Activated CD4-positive, alpha-beta memory T cell treated with anti-CD3 and anti-CD28 coated beads, Interleukin-2, amount 10 ng/mL, durations not matched to agents 7 days and 5 days (primary cell): ENCODE measurements at regions of chr2 and their contacts with region 1.

Region 1: GRCh38 chr2:203730076-203730729 is 23.8 kb downstream of the CD28 start:
- DNase-seq: no peak
- H3K4me3 Mint-ChIP-seq: peak overlapping the region; percentile 28
- H3K27ac Mint-ChIP-seq: peak overlapping the region; percentile 94
- H3K4me1 Mint-ChIP-seq: peaks cover 92% of the 10 kb centered on the region
- H3K27me3 Mint-ChIP-seq: no peaks in the 10 kb centered on the region

Region 2: GRCh38 chr2:203623096-203623495 is 107.1 kb before region 1 on chr2:
- CTCF ChIA-PET with region 1: no interaction called
- POLR2A ChIA-PET with region 1: no interaction called
- DNase-seq: no peak
- H3K4me3 Mint-ChIP-seq: no peak overlapping the region
- H3K27ac Mint-ChIP-seq: no peak overlapping the region
- H3K4me1 Mint-ChIP-seq: peaks cover 8% of the 10 kb centered on the region
- H3K27me3 Mint-ChIP-seq: peaks cover 3% of the 10 kb centered on the region

Region 3: DNA sequence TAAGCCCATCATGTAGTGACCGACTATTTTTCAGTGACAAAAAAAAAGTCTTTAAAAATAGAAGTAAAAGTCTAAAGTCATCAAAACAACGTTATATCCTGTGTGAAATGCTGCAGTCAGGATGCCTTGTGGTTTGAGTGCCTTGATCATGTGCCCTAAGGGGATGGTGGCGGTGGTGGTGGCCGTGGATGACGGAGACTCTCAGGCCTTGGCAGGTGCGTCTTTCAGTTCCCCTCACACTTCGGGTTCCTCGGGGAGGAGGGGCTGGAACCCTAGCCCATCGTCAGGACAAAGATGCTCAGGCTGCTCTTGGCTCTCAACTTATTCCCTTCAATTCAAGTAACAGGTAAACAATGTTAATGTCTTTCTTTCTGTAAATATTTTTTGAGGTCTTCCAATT is 23.8 kb before region 1 on chr2 and contains the start of gene CD28:
- CTCF ChIA-PET with region 1: interaction called, 8 read pairs
- POLR2A ChIA-PET with region 1: interaction called, 516 read pairs
- DNase-seq: peak; percentile 95
- H3K4me3 Mint-ChIP-seq: peak within 1 kb of the TSS; percentile 90
- H3K27ac Mint-ChIP-seq: peak within 1 kb of the TSS; percentile 97
- H3K4me1 Mint-ChIP-seq: peaks cover 46% of the 10 kb centered on the region
- H3K27me3 Mint-ChIP-seq: no peaks in the 10 kb centered on the region
- total RNA-seq, gene CD28: 194 to 205 TPM

Region 4: GRCh38 chr2:203718087-203718486 is 12.1 kb before region 1 on chr2:
- CTCF ChIA-PET with region 1: interaction called, 45 read pairs
- POLR2A ChIA-PET with region 1: interaction called, 516 read pairs
- DNase-seq: peak; percentile 80
- H3K4me3 Mint-ChIP-seq: peak overlapping the region; percentile 50
- H3K27ac Mint-ChIP-seq: peak overlapping the region; percentile 93
- H3K4me1 Mint-ChIP-seq: peaks cover 99% of the 10 kb centered on the region
- H3K27me3 Mint-ChIP-seq: no peaks in the 10 kb centered on the region

Region 5: GRCh38 chr2:203751685-203752271 is 21.6 kb after region 1 on chr2:
- CTCF ChIA-PET with region 1: interaction called, 8 read pairs
- POLR2A ChIA-PET with region 1: interaction called, 100 read pairs
- DNase-seq: no peak
- H3K4me3 Mint-ChIP-seq: no peak overlapping the region
- H3K27ac Mint-ChIP-seq: peak overlapping the region; percentile 47
- H3K4me1 Mint-ChIP-seq: peaks cover 46% of the 10 kb centered on the region
- H3K27me3 Mint-ChIP-seq: no peaks in the 10 kb centered on the region